Activated CD8-positive, alpha-beta T cell treated with anti-CD3 and anti-CD28 coated beads for 36 hours (primary cell): ENCODE measurements at regions of chr11 and their contacts with region 1.

Region 1: DNA sequence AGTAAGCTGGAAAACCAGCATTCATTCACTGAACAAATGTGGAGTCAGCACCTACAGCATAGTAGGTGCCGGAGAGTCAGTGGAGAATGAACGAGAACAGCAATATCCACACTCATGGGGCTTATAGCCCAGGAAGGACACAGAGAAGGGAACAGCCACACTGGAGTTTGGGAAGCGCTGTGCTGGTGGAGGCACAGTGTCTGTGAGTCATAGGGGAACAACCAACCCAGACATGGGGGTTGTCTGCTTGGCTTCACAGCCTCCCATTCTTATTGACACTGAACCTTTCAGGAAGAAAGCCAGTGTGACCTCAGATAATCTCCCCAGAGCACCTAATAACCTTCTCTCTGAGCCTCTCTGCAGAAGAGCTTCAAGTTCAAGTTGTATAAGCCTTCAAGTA is 56.6 kb upstream of the UBASH3B start:
- DNase-seq: no peak
- ATAC-seq: no peak
- H3K4me3 Mint-ChIP-seq: no peak overlapping the region
- H3K27ac Mint-ChIP-seq: no peak overlapping the region
- H3K4me1 Mint-ChIP-seq: no peaks in the 10 kb centered on the region
- H3K27me3 Mint-ChIP-seq: peaks cover 10% of the 10 kb centered on the region
- CTCF ChIP-seq: no peak

Region 2: DNA sequence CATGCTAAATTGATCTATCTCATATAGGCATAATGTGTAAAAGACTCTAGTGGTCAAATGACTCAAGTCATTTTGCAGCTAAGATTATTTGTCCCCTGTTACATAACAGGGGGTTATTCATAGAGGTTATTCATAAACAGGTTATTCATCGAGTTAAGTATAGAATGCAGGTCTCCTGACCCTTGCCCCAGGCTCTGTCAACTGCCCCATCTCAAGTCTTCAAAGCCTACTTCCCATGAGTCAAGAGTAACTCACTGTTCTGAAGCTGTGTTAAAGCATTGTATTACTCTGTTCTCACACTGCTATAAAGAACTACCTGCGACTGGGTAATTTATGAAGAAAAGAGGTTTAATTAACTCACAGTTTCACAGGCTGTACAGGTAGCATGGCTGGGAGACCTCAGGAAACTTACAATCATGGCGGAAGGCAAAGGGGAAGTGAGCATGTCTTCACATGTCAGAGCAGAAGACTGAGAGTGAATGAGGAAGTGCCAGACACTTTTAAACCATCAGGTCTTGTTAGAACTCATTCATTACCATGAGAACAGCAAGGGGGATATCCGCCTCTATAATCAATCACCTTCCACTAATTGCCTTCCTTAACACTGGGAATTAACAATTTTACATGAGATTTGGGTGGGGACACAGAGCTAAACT is 256.8 kb before region 1 on chr11:
- CTCF ChIA-PET with region 1: no interaction called
- POLR2A ChIA-PET with region 1: no interaction called
- intact Hi-C with region 1: no loop called
- DNase-seq: no peak
- ATAC-seq: no peak
- H3K4me3 Mint-ChIP-seq: no peak overlapping the region
- H3K27ac Mint-ChIP-seq: no peak overlapping the region
- H3K4me1 Mint-ChIP-seq: no peaks in the 10 kb centered on the region
- H3K27me3 Mint-ChIP-seq: no peaks in the 10 kb centered on the region
- CTCF ChIP-seq: no peak

Region 3: GRCh38 chr11:122439911-122440810 is 158.8 kb before region 1 on chr11:
- CTCF ChIA-PET with region 1: no interaction called
- POLR2A ChIA-PET with region 1: no interaction called
- intact Hi-C with region 1: no loop called
- DNase-seq: no peak
- ATAC-seq: no peak
- H3K4me3 Mint-ChIP-seq: no peak overlapping the region
- H3K27ac Mint-ChIP-seq: no peak overlapping the region
- H3K4me1 Mint-ChIP-seq: peaks cover 5% of the 10 kb centered on the region
- H3K27me3 Mint-ChIP-seq: peaks cover 19% of the 10 kb centered on the region
- CTCF ChIP-seq: no peak

Region 4: GRCh38 chr11:122578168-122578825 is 20.7 kb before region 1 on chr11:
- CTCF ChIA-PET with region 1: interaction called, 20 read pairs
- POLR2A ChIA-PET with region 1: no interaction called
- intact Hi-C with region 1: no loop called
- DNase-seq: peak; percentile 19
- ATAC-seq: no peak
- H3K4me3 Mint-ChIP-seq: no peak overlapping the region
- H3K27ac Mint-ChIP-seq: no peak overlapping the region
- H3K4me1 Mint-ChIP-seq: peaks cover 10% of the 10 kb centered on the region
- H3K27me3 Mint-ChIP-seq: peaks cover 1% of the 10 kb centered on the region
- CTCF ChIP-seq: no peak